Adrenal gland (tissue), 19 donors: ENCODE measurements at regions of chr10 and their contacts with region 1.

Region 1: GRCh38 chr10:100743626-100744135 is 1.7 kb upstream of the PAX2 start:
- DNase-seq: peak; percentile 43 to 77 (median 70)
- H3K4me3 ChIP-seq: no peak overlapping the region
- H3K27ac ChIP-seq: no peak overlapping the region
- H3K4me1 ChIP-seq: peaks cover 12 to 29% of the 10 kb centered on the region in 2 donors
- H3K27me3 ChIP-seq: peaks cover 90% of the 10 kb centered on the region
- CTCF ChIP-seq: peak; percentile 45 to 70 (median 63)
- POLR2A ChIP-seq: no peak

Region 2: DNA sequence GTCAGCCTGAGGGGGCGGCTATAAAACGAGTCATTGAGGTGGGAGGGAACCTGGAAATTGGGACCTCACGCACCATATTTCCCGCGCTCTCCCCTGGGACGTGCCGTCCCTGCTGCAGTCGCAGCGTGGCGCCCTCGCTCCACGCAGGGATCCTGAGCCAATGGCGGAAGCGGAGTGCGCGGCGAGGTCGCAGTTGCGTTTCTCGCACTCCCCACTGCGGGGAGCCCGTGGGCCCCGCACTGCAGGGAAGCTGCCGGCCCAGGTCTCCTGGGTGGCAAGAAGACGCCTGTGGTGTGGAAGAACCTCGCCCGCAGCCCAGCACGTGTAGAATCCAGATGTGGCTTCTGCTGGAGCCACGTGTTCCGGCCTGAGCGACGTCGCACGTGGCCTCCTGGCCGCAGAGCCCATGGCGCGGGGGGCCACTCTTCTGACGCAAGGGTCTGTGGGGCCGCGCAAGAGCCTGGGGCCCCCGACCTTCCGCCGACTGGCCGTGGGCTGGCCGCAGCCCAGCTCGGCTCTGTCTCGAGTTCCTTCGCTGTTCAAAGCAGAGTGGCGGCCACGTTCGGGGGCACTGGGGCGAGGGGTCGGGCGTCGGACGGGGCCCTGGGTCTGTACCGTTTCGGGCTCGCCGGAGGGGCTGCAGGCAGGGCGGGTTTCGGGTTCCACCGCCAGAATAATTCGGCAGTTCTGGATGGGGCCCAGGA is 181.5 kb before region 1 on chr10:
- intact Hi-C with region 1: loop called (anchors 5 kb)
- DNase-seq: peak; percentile 75 to 85 (median 78)
- H3K4me3 ChIP-seq: no peak overlapping the region
- H3K27ac ChIP-seq: no peak overlapping the region
- H3K4me1 ChIP-seq: peaks cover 5 to 6% of the 10 kb centered on the region in 2 donors
- H3K27me3 ChIP-seq: peaks cover 18% of the 10 kb centered on the region
- CTCF ChIP-seq: peak; percentile 88 to 99 (median 95)
- POLR2A ChIP-seq: no peak

Region 3: GRCh38 chr10:100569618-100570473 is 173.8 kb before region 1 on chr10:
- intact Hi-C with region 1: loop called in 1 of 2 experiments (anchors 5 kb)
- DNase-seq: no peak
- H3K4me3 ChIP-seq: no peak overlapping the region
- H3K27ac ChIP-seq: no peak overlapping the region
- H3K4me1 ChIP-seq: no peaks in the 10 kb centered on the region
- H3K27me3 ChIP-seq: peaks cover 30% of the 10 kb centered on the region
- CTCF ChIP-seq: no peak
- POLR2A ChIP-seq: no peak

Region 4: GRCh38 chr10:100670828-100671479 is 72.7 kb before region 1 on chr10:
- intact Hi-C with region 1: loop called in 1 of 2 experiments (anchors 5 kb)
- DNase-seq: peak in 4 of 7 donors; percentile 17 to 47 (median 34)
- H3K4me3 ChIP-seq: no peak overlapping the region
- H3K27ac ChIP-seq: no peak overlapping the region
- H3K4me1 ChIP-seq: no peaks in the 10 kb centered on the region
- H3K27me3 ChIP-seq: peaks cover 49% of the 10 kb centered on the region
- CTCF ChIP-seq: peak in 4 of 6 experiments; percentile 6 to 83 (median 72)
- POLR2A ChIP-seq: no peak

Region 5: DNA sequence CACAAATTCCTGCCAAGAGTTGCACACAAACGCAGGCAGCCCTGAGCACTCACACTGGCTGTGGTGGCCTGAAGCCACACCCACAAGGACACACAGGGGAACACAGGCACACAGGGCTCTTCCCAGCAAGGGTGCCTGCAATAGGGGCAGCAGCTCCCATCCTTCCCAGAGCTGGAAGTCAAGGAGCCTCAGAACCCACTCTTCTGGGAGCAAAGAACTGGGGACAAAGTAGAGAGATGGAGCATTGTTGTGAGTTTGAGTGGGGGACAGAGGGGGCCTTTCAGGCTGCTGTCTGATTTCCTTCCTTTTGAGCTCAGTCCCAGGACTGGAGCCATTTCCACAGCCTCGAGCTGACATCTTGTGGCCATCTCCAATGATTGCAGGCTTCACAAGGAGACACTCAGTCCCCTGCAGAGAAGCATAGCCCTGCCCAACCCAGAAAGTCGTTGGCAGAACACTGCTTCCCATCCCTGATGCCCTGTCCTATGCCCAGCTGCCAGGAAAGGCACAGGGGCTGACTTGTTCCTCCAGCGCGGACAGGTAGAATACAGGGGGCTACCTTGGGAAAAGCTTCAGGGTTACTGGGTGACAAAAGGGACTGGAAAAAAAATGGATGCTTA is 134.7 kb after region 1 on chr10:
- intact Hi-C with region 1: loop called in 1 of 2 experiments (anchors 10 kb)
- DNase-seq: peak; percentile 60 to 85 (median 76)
- H3K4me3 ChIP-seq: no peak overlapping the region
- H3K27ac ChIP-seq: no peak overlapping the region
- H3K4me1 ChIP-seq: peaks cover 0 to 35% of the 10 kb centered on the region in 2 donors
- H3K27me3 ChIP-seq: no peaks in the 10 kb centered on the region
- CTCF ChIP-seq: peak; percentile 31 to 85 (median 77)
- POLR2A ChIP-seq: no peak